ENCODE measurements at regions of chr9 and their contacts with region 1.

Region 1: GRCh38 chr9:92877531-92878430 is at the start of gene ZNF484:
- DNase-seq: peak; percentile 83
- ATAC-seq: peak; percentile 96
- H3K4me3 Mint-ChIP-seq: peak within 1 kb of the TSS; percentile 99
- H3K27ac Mint-ChIP-seq: peak within 1 kb of the TSS; percentile 99
- H3K4me1 Mint-ChIP-seq: peaks cover 28% of the 10 kb centered on the region
- H3K27me3 Mint-ChIP-seq: no peaks in the 10 kb centered on the region
- CTCF ChIP-seq: no peak
- total RNA-seq, gene ZNF484: 12.2 and 14.0 TPM in 2 replicates

Region 2: GRCh38 chr9:92325269-92325990 is 552.4 kb before region 1 on chr9 and contains the starts of genes CENPP and NOL8:
- CTCF ChIA-PET with region 1: no interaction called
- POLR2A ChIA-PET with region 1: no interaction called
- intact Hi-C with region 1: loop called (anchors 10 kb)
- DNase-seq: peak; percentile 74
- ATAC-seq: peak; percentile 91
- H3K4me3 Mint-ChIP-seq: peak within 1 kb of the TSS; percentile 98
- H3K27ac Mint-ChIP-seq: peak within 1 kb of the TSS; percentile 98
- H3K4me1 Mint-ChIP-seq: peaks cover 27% of the 10 kb centered on the region
- H3K27me3 Mint-ChIP-seq: no peaks in the 10 kb centered on the region
- CTCF ChIP-seq: no peak
- total RNA-seq, gene CENPP: 5.7 and 5.9 TPM in 2 replicates
- total RNA-seq, gene NOL8: 67.0 and 78.4 TPM in 2 replicates

Region 3: DNA sequence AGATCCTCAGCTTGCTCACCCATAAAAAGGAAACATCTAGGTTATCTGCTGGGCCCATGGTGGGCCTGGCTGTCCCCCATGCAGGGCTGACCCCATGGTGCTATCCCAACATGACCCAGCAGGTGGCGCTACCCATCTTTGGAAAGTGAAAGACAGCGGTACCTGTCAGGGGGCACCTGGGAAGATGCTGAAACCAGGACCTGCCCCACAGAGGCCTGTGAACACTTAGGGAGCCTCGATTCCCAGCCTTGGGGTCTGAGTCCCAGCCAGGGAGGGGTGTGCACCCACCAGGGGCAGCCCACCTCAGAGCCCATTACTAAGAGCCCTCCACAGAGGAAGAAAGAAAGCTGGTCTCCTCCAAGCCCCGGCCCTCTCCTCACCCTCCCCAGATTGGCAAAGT is 161.2 kb before region 1 on chr9:
- CTCF ChIA-PET with region 1: no interaction called
- POLR2A ChIA-PET with region 1: no interaction called
- intact Hi-C with region 1: loop called (anchors 5 kb)
- DNase-seq: peak; percentile 76
- ATAC-seq: peak; percentile 75
- H3K4me3 Mint-ChIP-seq: no peak overlapping the region
- H3K27ac Mint-ChIP-seq: no peak overlapping the region
- H3K4me1 Mint-ChIP-seq: peaks cover 51% of the 10 kb centered on the region
- H3K27me3 Mint-ChIP-seq: no peaks in the 10 kb centered on the region
- CTCF ChIP-seq: peak; percentile 75

Region 4: DNA sequence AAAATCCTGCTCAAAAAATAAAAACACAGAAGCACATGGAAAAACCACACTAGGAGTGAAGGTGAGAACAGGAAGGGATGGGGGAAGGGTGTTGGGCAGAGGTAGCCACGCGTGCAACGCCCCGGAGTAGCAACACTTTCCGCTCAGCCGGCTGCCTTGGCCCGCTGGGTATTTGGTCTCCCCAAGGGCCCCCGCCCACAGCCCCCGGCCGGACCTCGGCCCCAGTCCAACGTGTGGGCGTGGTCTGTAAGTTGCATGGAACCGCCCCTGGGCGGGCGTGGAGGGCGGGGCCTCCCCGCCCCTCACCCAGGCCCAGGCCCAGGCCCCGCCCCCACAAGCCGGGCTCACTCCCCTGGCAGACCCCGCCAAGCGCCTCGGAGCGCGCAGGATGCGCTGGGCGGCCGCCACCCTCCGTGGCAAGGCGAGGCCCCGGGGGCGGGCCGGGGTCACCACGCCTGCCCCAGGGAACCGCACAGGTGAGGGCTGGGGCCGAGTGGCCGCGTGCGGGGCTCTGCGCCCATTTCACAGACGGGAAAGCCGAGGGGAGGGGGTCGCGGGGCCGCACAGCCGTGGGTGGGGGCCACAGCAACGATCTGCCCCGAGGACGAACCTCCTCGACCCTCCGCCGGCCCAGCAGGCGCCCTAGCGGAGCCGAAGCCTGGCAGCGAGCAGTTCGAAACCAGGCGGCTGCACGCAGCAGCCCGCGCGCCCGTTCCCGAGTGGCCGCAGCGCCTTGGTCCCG is 180.7 kb after region 1 on chr9 and contains the start of gene SUSD3:
- CTCF ChIA-PET with region 1: no interaction called
- POLR2A ChIA-PET with region 1: no interaction called
- intact Hi-C with region 1: loop called (anchors 1 kb)
- DNase-seq: peak; percentile 73
- ATAC-seq: peak; percentile 75
- H3K4me3 Mint-ChIP-seq: peak within 1 kb of the TSS; percentile 87
- H3K27ac Mint-ChIP-seq: peak within 1 kb of the TSS; percentile 95
- H3K4me1 Mint-ChIP-seq: peaks cover 63% of the 10 kb centered on the region
- H3K27me3 Mint-ChIP-seq: no peaks in the 10 kb centered on the region
- CTCF ChIP-seq: no peak
- total RNA-seq, gene SUSD3: 9.1 and 12.9 TPM in 2 replicates

Region 5: DNA sequence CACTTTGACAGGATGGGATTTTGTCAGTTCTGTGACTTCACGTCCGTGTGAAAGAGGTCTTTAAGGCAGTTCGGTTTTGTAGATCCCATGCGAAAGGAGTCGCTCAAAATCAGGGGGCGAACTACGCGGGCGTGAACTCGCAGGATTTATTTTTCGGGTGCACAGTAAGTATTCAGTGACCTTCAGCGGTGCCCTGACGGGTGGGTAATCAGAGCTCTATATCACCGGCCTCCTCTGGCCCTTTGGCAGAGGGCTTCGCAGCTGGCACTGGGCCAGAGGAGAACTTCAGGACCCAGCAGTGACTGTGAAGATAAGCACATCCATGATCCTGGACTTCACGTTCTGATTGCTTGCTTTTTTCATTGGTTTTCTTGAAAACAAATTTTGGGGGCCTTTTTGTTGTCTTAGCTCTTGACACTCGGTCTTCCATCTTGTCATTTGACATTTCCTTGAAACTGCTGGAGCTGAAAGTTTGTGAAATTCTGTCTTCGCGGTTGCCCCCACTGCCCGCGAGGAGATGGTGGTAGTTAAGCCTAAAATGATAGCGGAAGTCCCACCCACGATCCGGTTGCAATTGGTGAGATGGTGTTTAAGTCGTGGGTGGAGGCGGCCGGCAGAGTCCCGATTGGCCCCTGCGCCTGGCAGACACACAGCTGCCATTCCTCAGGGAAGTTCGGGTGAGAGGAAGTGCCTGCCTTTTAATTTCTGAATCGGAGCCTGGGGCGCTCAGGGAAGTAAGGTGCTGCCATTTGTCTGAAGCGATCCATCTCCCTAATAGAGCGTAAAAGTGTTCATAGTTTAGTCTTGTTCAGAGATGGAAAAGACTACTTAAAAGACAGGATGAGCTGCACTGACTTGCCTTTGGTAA is 575.5 kb after region 1 on chr9 and contains the start of gene FAM120AOS:
- CTCF ChIA-PET with region 1: no interaction called
- POLR2A ChIA-PET with region 1: no interaction called
- intact Hi-C with region 1: loop called (anchors 10 kb)
- DNase-seq: peak; percentile 68
- ATAC-seq: peak; percentile 74
- H3K4me3 Mint-ChIP-seq: peak within 1 kb of the TSS; percentile 96
- H3K27ac Mint-ChIP-seq: peak within 1 kb of the TSS; percentile 97
- H3K4me1 Mint-ChIP-seq: peaks cover 56% of the 10 kb centered on the region
- H3K27me3 Mint-ChIP-seq: no peaks in the 10 kb centered on the region
- CTCF ChIP-seq: no peak
- total RNA-seq, gene FAM120AOS: 35.8 and 39.0 TPM in 2 replicates

Region 6: DNA sequence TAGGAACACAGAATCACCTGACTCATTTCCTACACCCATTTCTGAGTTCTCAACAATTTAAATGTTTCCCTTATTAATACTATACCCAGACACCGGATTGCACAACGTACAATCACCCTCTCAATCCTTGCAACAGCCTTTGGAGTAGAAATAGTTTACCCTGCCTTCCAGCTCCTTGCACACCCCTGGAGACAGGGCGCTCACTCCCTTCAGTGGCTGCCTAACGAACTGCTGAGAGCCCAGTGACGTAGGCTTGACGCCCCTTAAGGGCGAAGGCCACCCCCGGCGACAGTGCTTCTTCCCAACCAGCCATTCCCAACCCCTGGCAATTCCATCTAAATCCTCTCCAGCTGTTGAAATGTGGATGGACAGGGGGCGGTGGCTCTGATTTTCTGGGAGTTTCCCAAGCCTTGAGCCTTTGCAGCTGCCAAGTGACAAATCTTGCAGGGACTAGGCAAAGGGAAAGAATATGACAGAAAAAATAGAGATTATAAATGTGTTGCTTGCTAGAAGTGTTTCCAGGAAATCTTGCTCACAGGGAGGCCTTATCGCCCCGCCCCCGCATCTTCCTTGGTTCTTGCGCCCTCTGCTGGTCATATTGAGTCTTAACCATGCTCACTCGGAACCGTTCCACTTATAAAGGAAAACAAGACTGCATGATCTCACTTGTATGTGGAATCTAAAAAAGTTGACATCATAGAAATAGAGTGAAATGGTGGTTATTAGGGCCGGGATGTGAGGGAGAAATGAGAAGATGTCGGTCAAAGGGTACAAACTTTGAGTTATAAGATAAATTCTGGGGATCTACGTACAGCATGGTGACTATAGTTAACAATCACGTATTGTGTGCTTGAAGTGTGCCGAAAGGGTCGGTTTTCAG is 1085.0 kb after region 1 on chr9:
- CTCF ChIA-PET with region 1: no interaction called
- POLR2A ChIA-PET with region 1: no interaction called
- intact Hi-C with region 1: loop called (anchors 5 kb)
- DNase-seq: peak; percentile 51
- ATAC-seq: peak; percentile 43
- H3K4me3 Mint-ChIP-seq: no peak overlapping the region
- H3K27ac Mint-ChIP-seq: no peak overlapping the region
- H3K4me1 Mint-ChIP-seq: peaks cover 27% of the 10 kb centered on the region
- H3K27me3 Mint-ChIP-seq: peaks cover 47% of the 10 kb centered on the region
- CTCF ChIP-seq: peak; percentile 49

Region 7: DNA sequence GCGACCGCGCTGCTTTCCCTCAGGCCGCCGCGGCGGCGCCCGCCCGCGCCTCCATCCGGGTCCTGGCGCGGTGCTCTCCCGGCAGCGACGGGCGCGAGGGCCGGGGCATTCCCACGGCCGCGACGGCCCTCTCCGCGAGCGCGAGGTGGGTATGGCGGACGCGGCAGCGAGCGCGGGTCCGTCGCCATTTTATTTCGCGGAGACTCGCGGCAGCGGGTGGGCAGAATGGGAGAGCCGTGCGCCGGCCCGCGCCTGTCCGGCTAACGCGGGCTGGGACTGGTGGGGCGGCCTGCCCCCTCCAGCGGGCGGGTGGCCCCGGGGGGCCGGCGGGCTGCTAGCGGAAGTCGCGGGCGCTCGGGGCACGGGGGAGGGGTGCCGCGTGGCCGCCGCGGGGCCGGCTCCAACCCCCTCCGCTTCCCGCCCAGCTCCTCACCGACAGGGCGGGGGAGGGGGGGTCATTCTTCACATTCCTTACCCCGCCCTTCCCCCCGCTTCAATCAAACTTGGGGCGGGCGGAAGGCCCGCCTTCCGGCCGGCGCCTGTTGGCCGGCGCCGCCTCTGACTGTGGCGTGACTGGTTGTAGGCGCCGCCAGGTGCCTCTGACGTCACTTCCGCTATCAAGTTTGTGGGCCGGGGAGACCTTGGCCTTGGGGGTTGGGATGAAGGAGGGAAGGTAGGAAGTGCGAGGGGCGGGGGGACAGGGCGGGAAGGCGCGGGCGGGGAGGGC is 1288.6 kb after region 1 on chr9:
- CTCF ChIA-PET with region 1: no interaction called
- POLR2A ChIA-PET with region 1: no interaction called
- intact Hi-C with region 1: loop called (anchors 5 kb)
- DNase-seq: peak; percentile 85
- ATAC-seq: peak; percentile 63
- H3K4me3 Mint-ChIP-seq: peak overlapping the region; percentile 89
- H3K27ac Mint-ChIP-seq: peak overlapping the region; percentile 87
- H3K4me1 Mint-ChIP-seq: peaks cover 49% of the 10 kb centered on the region
- H3K27me3 Mint-ChIP-seq: no peaks in the 10 kb centered on the region
- CTCF ChIP-seq: no peak